Endothelial cell of umbilical vein (primary cell): ENCODE measurements at regions of chr1 and their contacts with region 1.

Region 1: GRCh38 chr1:6052543-6053205 is 7.0 kb downstream of the KCNAB2 start:
- DNase-seq: peak; percentile 70
- H3K4me3 ChIP-seq: no peak overlapping the region
- H3K27ac ChIP-seq: no peak overlapping the region
- H3K4me1 ChIP-seq: no peaks in the 10 kb centered on the region
- H3K27me3 ChIP-seq: no peaks in the 10 kb centered on the region
- CTCF ChIP-seq: peak; percentile 59 to 62
- POLR2A ChIP-seq: no peak

Region 2: DNA sequence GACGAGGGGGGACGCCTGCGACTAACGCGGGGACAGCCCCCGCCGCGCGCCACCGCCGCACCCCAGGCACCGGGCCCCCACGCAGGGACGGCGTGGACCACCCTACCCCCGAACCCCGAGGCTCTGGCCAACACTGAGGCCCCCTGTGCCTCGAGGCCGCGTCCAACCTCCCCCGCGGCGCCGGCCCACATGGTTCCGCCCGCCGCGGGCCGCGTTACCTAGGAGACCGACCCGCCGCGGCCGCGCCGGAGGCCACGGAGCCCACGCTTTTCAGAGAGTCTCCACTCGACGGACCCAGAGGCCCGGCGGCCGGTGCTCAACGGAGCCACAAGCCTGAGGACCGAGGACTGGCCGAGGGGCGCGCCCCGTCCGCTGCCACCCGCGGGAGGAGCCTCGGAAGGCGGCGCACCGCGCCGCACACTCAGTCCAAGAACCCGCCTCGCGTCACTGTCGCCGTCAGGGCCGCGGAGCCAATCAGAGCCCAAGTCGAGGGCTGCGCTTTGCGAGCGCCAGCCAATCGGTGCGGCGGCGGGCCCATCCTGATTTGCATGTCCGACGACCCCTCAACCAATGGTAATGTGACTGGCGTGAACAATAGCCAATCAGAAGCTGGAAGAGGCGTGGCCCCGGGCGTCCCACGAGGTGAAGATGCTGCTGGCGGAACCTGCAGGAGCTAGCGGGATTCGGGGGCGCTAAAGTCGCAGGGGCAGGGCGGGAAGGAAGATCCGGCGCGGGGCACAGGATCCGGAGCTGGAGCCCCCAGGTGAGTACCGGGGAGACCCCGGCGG is 60.5 kb before region 1 on chr1 and contains the start of gene NPHP4:
- CTCF ChIA-PET with region 1: no interaction called
- POLR2A ChIA-PET with region 1: no interaction called
- dilution Hi-C with region 1: no loop called
- intact Hi-C with region 1: loop called (anchors 1 kb)
- DNase-seq: peak; percentile 100
- H3K4me3 ChIP-seq: peak within 1 kb of the TSS; percentile 64 to 83 (median 74)
- H3K27ac ChIP-seq: peak within 1 kb of the TSS; percentile 82
- H3K4me1 ChIP-seq: peaks cover 10% of the 10 kb centered on the region
- H3K27me3 ChIP-seq: no peaks in the 10 kb centered on the region
- CTCF ChIP-seq: no peak
- POLR2A ChIP-seq: no peak
- total RNA-seq, gene NPHP4: 9.9 and 11.7 TPM in 2 replicates

Region 3: DNA sequence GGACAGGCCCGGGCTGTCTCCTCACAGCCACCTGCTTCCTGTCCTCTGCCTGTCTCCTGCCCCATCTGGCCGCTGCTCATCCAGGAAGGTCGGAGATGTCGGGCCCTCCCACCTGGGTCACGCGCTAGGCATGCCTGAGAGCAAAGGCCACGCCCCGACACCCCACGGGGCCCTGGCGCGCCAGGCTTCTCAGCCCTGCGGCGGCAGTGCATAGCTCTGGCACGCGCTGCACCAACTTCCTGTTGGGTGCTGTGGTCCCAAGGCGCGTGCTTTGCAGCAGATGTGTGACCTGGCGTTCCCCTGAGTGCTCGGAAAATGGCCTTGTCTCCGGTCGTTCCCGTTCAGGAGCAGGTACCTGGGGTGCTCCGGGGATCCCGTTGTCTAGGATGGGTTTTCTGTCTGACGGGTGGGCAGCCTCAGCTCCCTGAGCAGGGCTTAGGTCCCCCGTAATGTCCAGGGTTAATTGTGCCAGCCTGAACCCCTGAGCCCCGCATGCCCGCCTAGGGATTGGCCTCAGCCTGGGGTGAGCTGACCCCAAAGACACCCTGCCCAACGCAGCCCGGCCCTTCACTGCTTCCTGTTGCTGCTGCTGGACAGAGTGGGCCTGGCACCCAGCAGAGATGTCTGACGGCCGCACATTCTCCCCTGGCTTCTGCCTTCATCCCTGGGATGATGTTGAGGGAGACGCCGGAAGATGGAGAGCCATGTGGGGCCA is 26.4 kb before region 1 on chr1:
- CTCF ChIA-PET with region 1: no interaction called
- POLR2A ChIA-PET with region 1: no interaction called
- dilution Hi-C with region 1: no loop called
- intact Hi-C with region 1: no loop called
- DNase-seq: no peak
- H3K4me3 ChIP-seq: no peak overlapping the region
- H3K27ac ChIP-seq: no peak overlapping the region
- H3K4me1 ChIP-seq: no peaks in the 10 kb centered on the region
- H3K27me3 ChIP-seq: no peaks in the 10 kb centered on the region
- CTCF ChIP-seq: no peak
- POLR2A ChIP-seq: no peak

Region 4: DNA sequence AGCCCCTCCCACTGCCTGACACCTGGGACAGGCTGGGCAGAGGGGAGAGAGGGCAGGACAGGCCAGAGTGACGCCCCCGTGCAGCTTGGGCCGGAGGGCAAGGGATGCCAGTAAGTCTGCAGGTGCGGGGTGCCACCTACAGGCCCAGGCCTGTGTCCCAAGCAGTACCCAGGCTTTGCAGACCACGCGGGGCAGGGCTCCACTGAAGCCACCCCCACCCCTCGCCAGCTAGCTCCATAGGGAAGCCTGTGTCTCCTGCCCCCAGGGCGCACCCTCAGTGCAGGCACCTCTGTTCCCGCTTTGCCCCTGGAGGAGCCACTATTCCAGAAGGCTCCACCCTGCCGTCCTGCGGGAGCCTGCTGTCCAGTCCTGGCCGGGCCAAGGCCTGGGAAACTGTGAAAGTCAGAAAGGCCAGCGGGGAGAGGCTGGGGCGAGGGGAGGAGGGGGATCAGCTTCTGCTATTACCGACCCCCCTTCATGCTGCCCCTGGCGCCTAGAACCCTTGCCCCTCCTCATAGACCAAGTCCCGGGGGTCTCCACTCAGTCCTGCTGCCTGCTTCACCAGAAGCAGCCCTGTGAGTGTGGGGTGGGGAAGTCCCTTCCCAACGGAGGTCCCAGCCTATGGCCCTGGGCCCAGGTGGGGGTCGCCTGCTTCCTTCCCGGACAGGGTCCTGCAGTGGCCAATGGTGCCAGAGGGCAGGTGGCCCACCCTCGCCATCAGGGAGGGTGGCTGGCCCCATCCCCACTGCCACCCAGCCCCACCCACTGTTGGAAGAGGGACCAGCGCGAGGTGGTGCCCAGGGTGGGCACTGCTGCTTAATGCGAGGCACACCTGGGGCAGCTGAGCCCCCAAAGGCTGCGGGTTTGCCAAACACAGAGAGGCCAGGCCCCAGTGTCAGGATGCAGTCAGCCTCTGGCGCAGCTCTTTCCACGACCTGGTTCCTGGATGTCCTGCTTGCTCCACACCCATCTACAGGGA is 47.4 kb after region 1 on chr1:
- CTCF ChIA-PET with region 1: interaction called, 5 read pairs
- POLR2A ChIA-PET with region 1: no interaction called
- dilution Hi-C with region 1: no loop called
- intact Hi-C with region 1: loop called (anchors 2 kb)
- DNase-seq: no peak
- H3K4me3 ChIP-seq: no peak overlapping the region
- H3K27ac ChIP-seq: no peak overlapping the region
- H3K4me1 ChIP-seq: no peaks in the 10 kb centered on the region
- H3K27me3 ChIP-seq: no peaks in the 10 kb centered on the region
- CTCF ChIP-seq: peak; percentile 4 to 6
- POLR2A ChIP-seq: no peak

Region 5: GRCh38 chr1:6171548-6172119 is 119.0 kb after region 1 on chr1:
- CTCF ChIA-PET with region 1: interaction called, 15 read pairs
- POLR2A ChIA-PET with region 1: no interaction called
- dilution Hi-C with region 1: no loop called
- intact Hi-C with region 1: loop called (anchors 1 kb)
- DNase-seq: peak; percentile 14
- H3K4me3 ChIP-seq: no peak overlapping the region
- H3K27ac ChIP-seq: no peak overlapping the region
- H3K4me1 ChIP-seq: no peaks in the 10 kb centered on the region
- H3K27me3 ChIP-seq: no peaks in the 10 kb centered on the region
- CTCF ChIP-seq: peak; percentile 17 to 49
- POLR2A ChIP-seq: no peak

Region 6: DNA sequence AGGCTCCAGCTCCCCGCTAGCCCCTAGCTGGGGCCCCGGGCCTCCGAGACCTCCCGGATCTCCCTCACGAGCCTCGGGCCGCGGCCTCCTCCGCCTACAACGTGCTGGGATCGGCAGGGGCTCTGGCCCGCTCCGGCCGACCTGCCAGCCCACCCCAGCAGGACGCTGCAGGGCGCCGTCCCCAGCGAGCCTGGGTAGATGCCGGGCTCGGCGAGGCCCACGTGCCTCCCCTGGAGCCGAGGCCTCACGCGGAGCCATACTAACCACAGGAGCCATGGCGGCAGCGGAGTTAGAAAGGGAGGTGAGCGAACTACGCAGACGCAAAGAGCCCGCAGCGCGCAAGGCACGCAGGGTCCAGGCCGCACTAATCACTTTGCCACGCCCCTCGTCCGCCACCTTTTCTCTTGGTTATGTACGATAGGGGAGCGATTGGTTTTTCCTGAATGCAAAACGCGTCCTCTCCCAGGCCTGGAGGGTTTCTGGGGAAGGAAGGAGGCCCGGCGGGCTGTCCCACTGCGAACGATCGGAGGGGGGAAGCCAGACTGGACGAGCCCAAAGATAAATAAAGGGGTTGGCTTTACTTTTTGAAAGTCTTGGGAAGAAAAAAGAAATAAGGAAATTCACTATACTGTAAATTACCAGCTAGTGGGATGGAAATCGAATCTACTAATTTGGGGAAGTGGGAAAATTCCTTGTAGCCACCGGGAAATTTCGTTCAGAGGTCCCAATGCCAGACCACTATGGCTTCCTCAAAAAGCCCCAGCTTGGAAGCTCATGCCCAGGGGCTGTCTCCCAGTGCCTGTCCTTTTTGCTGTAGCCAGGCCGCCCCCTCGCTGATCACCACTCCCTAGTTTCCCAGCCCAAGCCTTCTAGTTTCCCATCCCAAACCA is 146.9 kb after region 1 on chr1 and contains the start of gene RPL22:
- CTCF ChIA-PET with region 1: interaction called, 20 read pairs
- POLR2A ChIA-PET with region 1: no interaction called
- dilution Hi-C with region 1: no loop called
- intact Hi-C with region 1: no loop called
- DNase-seq: peak; percentile 98
- H3K4me3 ChIP-seq: peak within 1 kb of the TSS; percentile 78 to 90 (median 82)
- H3K27ac ChIP-seq: peak within 1 kb of the TSS; percentile 66
- H3K4me1 ChIP-seq: peaks cover 17% of the 10 kb centered on the region
- H3K27me3 ChIP-seq: no peaks in the 10 kb centered on the region
- CTCF ChIP-seq: no peak
- POLR2A ChIP-seq: peak; percentile 85
- total RNA-seq, gene RPL22: 343 and 372 TPM in 2 replicates

Region 7: GRCh38 chr1:6385488-6386191 is 333.0 kb after region 1 on chr1:
- CTCF ChIA-PET with region 1: no interaction called
- POLR2A ChIA-PET with region 1: no interaction called
- dilution Hi-C with region 1: no loop called
- intact Hi-C with region 1: no loop called
- DNase-seq: peak; percentile 48
- H3K4me3 ChIP-seq: no peak overlapping the region
- H3K27ac ChIP-seq: peak overlapping the region; percentile 62
- H3K4me1 ChIP-seq: peaks cover 12% of the 10 kb centered on the region
- H3K27me3 ChIP-seq: no peaks in the 10 kb centered on the region
- CTCF ChIP-seq: no peak
- POLR2A ChIP-seq: no peak

Region 8: DNA sequence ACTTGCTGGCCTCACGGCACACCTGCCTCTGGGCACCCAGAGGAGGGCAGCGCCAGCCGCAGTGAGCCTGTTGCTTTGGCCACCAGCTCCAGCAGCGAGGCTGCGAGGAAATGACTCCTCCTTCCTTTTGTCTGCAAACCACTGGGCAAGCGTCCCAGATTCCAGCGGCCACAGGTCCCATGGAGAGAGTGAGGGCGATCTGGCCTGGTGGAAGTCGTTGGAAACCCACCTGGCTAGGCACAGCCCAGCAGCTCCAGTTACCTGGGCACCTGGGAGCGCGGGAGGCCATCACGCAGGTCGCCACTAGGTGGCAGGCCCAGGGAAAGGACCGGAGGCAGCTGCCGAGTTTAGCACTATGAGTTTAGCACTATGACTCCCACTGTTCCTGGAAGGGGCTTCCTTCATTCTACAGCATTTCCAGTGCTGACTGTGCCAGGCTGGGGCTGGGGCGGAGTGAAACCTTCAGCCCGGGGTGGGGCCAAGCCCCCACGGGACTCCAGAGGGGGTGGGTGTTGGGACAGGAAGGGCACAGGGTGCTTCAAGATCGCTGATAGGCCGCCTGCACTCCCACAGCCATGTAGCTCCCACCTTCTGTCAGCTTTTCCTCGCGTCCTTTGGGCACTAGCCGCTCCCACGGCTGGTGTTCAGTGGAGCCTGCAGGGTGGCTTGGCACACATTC is 370.8 kb after region 1 on chr1:
- CTCF ChIA-PET with region 1: no interaction called
- POLR2A ChIA-PET with region 1: no interaction called
- dilution Hi-C with region 1: no loop called
- intact Hi-C with region 1: loop called (anchors 5 kb)
- DNase-seq: peak; percentile 75
- H3K4me3 ChIP-seq: peak overlapping the region in 1 of 3 experiments; percentile 9
- H3K27ac ChIP-seq: peak overlapping the region; percentile 83
- H3K4me1 ChIP-seq: peaks cover 35% of the 10 kb centered on the region
- H3K27me3 ChIP-seq: peaks cover 0 to 7% of the 10 kb centered on the region in 2 experiments
- CTCF ChIP-seq: peak; percentile 49 to 73
- POLR2A ChIP-seq: peak; percentile 31